Sigmoid colon (tissue), 7 donors: ENCODE measurements at regions of chr17 and their contacts with region 1.

Region 1: GRCh38 chr17:716238-716637 is 1.6 kb upstream of the VPS53 start:
- DNase-seq: no peak
- H3K4me3 ChIP-seq: no peak overlapping the region
- H3K27ac ChIP-seq: no peak overlapping the region
- H3K4me1 ChIP-seq: peaks cover 0 to 32% (median 28%) of the 10 kb centered on the region in 4 donors
- H3K27me3 ChIP-seq: no peaks in the 10 kb centered on the region
- CTCF ChIP-seq: no peak
- EP300 ChIP-seq: no peak
- POLR2A ChIP-seq: no peak

Region 2: GRCh38 chr17:588519-588918 is 127.7 kb before region 1 on chr17:
- intact Hi-C with region 1: no loop called
- DNase-seq: no peak
- H3K4me3 ChIP-seq: no peak overlapping the region
- H3K27ac ChIP-seq: no peak overlapping the region
- H3K4me1 ChIP-seq: no peaks in the 10 kb centered on the region
- H3K27me3 ChIP-seq: no peaks in the 10 kb centered on the region
- CTCF ChIP-seq: no peak
- EP300 ChIP-seq: no peak
- POLR2A ChIP-seq: no peak

Region 3: DNA sequence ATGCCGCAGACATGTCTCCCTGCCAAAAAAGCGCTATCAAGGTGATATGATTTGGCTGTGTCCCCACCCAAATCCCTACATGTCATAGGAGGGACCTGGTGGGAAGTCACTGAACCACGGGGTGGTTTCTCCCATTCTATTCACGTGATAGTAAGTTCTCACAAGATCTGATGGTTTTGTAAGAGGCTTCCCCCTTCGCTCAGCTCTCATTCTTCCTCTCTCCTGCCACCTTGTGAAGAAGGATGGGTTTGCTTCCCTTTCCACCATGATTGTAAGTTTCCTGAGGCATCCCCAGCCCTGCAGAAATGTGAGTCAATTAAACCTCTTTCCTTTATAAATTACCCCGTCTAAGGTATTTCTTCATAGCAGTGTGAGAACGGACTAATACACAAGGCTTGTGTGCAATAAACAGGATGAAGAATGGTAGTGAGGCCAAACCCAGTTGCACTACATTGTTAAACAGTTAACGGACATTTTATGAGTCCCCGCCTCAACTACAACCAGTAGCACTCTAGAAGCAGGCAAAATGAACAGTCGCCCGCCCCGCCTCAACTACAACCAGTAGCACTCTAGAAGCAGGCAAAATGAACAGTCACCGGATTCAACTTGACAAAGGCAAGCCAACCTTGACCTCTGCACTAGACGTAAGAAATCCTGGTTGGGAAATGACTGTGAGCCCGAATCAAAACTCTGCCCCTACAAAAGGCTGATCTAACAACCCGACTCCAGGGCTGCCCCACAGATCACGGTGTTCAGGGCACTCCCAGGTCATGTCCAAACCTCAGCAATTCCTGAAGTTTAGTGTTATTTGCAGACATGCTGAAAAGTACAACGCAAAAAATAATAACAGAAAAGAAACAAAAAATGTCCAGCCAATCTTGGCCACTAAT is 27.9 kb before region 1 on chr17:
- intact Hi-C with region 1: no loop called
- DNase-seq: no peak
- H3K4me3 ChIP-seq: no peak overlapping the region
- H3K27ac ChIP-seq: no peak overlapping the region
- H3K4me1 ChIP-seq: peaks cover 0 to 18% (median 0%) of the 10 kb centered on the region in 4 donors
- H3K27me3 ChIP-seq: no peaks in the 10 kb centered on the region
- CTCF ChIP-seq: peak in 3 of 4 experiments; percentile 10 to 21 (median 20)
- EP300 ChIP-seq: no peak
- POLR2A ChIP-seq: no peak

Region 4: DNA sequence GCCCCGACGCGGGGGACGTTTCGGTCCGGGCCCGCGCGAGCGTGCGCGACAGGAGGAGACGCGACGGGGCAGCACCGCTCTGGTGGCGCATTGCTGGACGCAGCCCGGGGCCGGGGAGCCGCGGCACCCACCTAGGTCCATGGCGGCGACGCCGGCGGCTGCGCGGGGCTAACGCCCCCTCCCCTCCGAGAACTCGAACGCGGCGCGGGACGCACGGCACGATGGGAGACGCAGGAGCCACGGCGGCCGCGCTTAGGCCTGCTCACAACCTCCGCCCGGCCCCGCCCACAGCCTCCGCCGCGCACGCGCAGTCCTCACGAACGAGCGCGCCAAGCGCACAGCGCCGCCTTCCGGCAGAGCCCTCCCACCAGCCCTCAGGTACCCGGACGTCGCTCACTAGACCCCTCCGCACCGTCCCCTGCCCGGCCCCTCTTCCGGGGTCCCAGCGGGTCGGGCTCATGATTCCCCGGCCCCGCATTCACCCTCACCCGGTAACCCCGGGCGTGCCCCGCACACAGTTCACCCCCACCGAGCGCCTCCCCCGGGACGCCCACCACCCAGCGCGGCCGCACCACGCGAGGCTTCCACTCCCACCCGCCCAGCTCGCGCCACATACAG is 35.9 kb after region 1 on chr17 and contains the start of gene GEMIN4:
- intact Hi-C with region 1: loop called (anchors 5 kb)
- DNase-seq: peak; percentile 94
- H3K4me3 ChIP-seq: peak within 1 kb of the TSS; percentile 64 to 95 (median 76)
- H3K27ac ChIP-seq: peak within 1 kb of the TSS; percentile 84 to 91 (median 87)
- H3K4me1 ChIP-seq: peaks cover 0 to 26% (median 19%) of the 10 kb centered on the region in 4 donors
- H3K27me3 ChIP-seq: no peaks in the 10 kb centered on the region
- CTCF ChIP-seq: peak; percentile 88 to 97 (median 94)
- EP300 ChIP-seq: no peak
- POLR2A ChIP-seq: peak in 1 of 2 donors; percentile 43
- total RNA-seq, gene GEMIN4: 11.4 to 19.4 (median 15.7) TPM